Activated naive CD4-positive, alpha-beta T cell treated with anti-CD3 and anti-CD28 coated beads, Interleukin-2, amount 10 ng/mL, durations not matched to agents 7 days and 5 days (primary cell): ENCODE measurements at regions of chr1 and their contacts with region 1.

Region 1: DNA sequence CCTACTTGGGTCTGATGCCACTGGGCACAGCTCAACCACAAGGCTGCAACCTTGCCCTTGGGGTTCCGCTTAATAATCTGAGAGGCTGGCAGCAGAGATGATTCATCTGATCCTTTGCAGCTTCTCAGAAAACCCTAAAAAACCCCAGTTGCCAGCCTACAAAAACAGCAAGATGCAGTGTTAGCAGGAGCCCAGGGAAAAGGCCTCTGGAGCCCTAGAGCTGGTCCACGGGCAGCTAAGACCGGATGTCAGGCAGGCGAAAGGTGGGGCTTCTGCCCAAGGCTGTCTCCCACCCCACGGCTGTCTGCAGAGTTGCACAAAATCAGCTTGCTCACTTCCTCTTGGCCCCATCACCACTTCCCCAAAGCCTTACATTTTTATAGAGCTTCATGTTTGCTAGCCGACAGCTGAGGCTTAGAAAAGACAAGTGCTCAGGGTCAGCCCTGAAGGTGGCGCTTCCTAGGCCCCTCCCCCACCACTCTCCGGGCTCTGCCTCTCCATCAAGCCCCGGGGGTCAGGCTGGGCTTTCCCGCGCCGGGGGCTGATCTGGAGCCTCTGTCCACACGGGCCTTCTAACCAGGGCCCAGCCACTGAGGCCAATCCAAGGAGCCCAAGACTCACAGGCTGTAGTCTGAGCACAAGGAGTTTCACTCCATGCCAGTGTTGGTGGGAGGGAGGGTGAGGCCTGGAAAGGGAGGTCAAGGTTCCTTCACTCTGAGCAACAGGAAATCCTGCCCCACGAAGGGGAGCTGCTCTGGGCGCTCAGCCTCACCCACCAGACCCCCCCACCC is 4.2 kb upstream of the ADORA3 start:
- DNase-seq: peak; percentile 76
- H3K4me3 Mint-ChIP-seq: peak overlapping the region; percentile 61
- H3K27ac Mint-ChIP-seq: peak overlapping the region; percentile 95
- H3K4me1 Mint-ChIP-seq: peaks cover 58% of the 10 kb centered on the region
- H3K27me3 Mint-ChIP-seq: no peaks in the 10 kb centered on the region

Region 2: DNA sequence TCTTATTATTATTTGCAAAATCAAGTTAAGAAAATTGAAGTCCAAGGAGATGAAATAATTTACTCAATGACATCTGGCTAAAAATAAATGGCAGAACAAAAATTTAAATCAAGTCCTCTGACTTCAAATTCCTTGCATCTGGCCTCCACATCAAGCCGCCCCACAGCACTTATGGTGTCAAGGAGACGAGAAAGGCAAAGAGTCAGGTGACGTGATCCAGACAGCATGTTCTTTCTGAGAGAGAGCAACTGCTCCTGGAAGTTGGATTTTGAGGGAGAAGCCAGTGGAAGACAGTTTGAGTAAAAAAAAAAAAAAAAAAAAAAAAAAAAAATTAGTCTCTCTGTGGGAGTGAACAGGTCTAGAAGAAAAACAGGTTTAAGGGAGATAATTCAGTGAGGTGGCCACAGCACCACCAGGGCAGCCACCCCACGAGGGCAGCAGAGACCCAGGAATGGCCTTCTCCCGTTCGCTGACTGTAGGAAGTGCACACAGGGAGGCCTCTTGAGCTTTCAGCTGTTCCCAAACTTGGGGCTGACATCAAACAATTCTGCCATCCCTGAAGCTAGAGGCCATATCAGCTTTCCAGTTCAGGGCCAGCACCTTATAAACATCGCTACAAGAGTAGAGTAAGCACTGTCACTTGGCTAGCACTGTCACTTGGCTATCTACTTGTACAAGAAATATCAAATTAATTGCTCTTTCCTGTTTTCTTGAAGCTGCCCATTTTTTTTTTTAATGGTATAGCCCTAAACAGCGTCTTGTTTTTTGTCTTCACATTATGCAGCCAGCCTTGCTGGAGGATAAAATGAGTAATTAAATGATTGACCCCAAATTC is 26.0 kb before region 1 on chr1:
- CTCF ChIA-PET with region 1: interaction called, 37 read pairs
- DNase-seq: peak; percentile 79
- H3K4me3 Mint-ChIP-seq: no peak overlapping the region
- H3K27ac Mint-ChIP-seq: no peak overlapping the region
- H3K4me1 Mint-ChIP-seq: peaks cover 46% of the 10 kb centered on the region
- H3K27me3 Mint-ChIP-seq: peaks cover 21% of the 10 kb centered on the region

Region 3: DNA sequence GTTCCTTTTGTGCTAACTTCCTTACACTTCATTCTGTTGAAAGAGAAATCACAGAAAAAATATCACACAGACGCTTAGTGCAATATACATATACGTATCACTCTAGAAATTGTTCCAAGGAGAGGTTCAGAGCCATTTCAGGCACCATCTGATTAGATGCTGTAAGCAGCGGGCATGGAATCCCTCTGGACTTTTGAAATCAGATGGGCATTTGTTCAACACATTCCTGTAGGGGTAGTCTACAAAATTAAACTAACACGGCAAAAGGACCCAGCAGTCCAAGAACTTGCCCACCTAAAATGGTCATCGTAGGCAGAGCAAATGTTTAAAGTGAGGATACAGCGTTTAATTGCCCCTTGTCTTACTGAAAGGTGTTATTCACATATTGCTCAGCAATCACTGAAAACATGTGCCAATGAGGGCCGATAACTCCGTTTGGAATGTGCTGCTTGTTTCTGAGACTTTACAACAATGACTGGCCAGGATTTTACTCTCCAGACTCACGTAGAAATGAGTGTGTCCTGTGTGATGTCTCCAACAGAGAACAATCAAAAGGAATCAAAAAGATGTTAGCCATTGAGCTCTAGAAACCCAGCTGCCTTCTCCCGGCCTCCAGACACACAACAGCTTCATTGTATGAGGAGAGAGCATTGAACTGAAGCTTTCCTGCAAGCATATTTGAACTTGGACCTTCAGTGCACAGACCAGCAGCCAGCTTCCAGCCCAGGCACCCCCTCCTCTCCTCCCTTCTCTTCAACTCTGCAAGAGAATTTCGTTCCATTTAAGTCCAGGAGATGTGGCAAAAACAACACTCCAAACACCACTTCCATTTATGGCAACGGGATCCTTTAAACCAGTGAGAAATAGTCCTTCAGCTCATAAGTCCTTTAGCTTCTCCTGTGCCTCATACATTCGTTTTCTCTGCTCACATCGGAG is 27.9 kb after region 1 on chr1:
- CTCF ChIA-PET with region 1: no interaction called
- DNase-seq: no peak
- H3K4me3 Mint-ChIP-seq: no peak overlapping the region
- H3K27ac Mint-ChIP-seq: no peak overlapping the region
- H3K4me1 Mint-ChIP-seq: peaks cover 6% of the 10 kb centered on the region
- H3K27me3 Mint-ChIP-seq: peaks cover 26% of the 10 kb centered on the region

Region 4: DNA sequence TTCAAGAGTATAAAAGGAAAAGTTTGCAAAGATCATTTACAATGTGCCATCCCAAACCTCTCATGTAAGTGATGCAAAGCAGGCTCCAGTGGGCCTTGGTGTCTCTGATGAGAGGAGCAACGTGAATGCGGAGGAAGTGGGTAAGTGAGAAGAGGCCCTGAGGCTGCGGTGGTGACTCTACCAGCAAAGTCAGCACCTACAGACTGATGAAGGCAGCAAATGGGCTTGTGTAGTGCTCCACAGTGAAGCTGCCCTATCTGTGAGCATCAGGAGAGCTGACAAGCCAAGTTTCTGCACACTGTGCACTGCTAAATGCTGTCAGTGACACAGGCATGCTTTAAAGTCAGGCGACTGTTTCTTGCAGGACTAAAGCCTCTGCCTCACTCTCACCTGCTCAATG is 96.4 kb after region 1 on chr1:
- CTCF ChIA-PET with region 1: interaction called, 21 read pairs
- DNase-seq: peak; percentile 88
- H3K4me3 Mint-ChIP-seq: peak overlapping the region; percentile 12
- H3K27ac Mint-ChIP-seq: peak overlapping the region; percentile 91
- H3K4me1 Mint-ChIP-seq: peaks cover 75% of the 10 kb centered on the region
- H3K27me3 Mint-ChIP-seq: no peaks in the 10 kb centered on the region

Region 5: DNA sequence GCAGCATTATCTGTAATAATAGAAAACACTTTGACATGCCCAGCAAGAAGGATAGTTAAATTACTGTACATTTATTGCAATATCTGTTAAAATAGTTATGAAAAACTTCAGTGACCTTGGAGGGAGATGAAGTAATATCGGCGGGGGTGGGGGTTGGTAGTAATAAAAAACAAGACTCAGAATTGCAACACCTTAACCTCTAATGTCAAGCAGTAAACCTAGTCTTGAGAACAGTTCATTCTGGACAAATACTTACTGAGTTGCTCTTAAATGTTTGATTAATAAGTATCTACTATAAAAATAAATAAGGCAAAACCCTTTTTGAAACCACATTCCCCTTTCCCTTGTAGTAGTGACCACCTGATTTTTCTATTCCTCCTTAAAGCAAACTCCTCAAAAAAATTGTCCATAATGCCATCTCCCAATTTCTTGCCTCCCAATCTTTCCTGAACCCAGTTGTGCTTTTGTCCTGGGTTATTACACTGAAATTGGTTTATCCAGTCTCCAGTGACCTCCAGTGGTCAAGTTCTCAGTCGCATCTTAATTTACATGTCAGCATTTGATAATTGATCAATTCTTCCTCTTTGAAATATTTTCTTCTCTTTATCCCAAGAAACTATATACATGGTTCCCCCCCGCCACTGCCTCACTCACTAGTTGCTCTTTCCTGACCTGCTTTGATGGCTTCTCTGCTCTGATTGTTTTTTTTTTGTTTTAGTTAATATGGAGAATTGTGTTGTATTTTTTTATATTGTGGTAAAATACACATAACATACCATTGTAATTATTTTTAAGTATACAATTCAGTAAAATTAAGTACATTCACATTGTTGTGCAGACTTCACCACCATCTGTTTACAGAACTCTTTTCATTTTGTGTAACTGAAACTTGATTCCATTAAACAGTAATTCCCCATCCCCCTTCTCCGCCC is 148.7 kb after region 1 on chr1:
- CTCF ChIA-PET with region 1: interaction called, 11 read pairs
- DNase-seq: peak; percentile 37
- H3K4me3 Mint-ChIP-seq: no peak overlapping the region
- H3K27ac Mint-ChIP-seq: no peak overlapping the region
- H3K4me1 Mint-ChIP-seq: peaks cover 35% of the 10 kb centered on the region
- H3K27me3 Mint-ChIP-seq: no peaks in the 10 kb centered on the region

Region 6: DNA sequence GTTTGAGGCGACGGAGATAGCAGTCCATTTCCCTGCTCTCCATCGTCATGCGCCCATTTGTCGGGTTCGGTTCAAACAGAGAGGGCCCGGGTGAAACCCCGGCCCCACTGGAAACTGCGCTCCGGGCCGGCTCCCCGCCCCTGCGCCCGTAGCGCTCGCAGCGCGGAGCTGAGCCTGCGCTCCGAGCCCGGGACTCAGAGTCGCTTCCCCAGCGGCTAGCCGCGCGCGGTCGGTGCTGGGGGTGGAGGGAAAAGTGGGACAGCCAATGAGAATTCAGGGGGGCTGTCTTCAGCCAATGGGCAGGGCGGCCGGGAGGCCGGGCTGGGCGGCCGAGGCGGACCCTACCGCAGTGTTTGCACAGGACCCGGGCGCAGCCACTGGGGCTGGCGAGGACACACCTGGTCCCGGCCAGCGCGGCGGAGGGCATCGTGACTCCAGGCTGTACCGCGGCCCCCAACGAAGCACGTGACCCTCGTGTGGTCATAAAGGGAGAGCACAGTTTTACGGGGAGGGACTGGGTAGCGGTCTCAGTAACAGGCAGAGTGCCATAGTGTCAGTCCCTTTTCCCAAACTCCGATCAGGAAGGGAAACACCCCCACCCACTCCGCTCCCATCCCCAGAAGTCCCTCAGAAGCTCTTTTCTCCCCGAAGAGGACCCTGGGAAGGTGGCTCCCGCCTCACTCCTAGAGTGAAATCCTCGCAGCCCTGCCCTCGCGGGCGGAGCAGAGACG is 231.8 kb after region 1 on chr1 and contains the start of gene INKA2:
- CTCF ChIA-PET with region 1: interaction called, 63 read pairs
- DNase-seq: peak; percentile 88
- H3K4me3 Mint-ChIP-seq: peak within 1 kb of the TSS; percentile 77
- H3K27ac Mint-ChIP-seq: peak within 1 kb of the TSS; percentile 79
- H3K4me1 Mint-ChIP-seq: peaks cover 23% of the 10 kb centered on the region
- H3K27me3 Mint-ChIP-seq: no peaks in the 10 kb centered on the region

Region 7: GRCh38 chr1:111769517-111770146 is 262.0 kb after region 1 on chr1:
- CTCF ChIA-PET with region 1: interaction called, 31 read pairs
- DNase-seq: peak; percentile 69
- H3K4me3 Mint-ChIP-seq: no peak overlapping the region
- H3K27ac Mint-ChIP-seq: no peak overlapping the region
- H3K4me1 Mint-ChIP-seq: peaks cover 5% of the 10 kb centered on the region
- H3K27me3 Mint-ChIP-seq: no peaks in the 10 kb centered on the region